ENCODE measurements at regions of chr3 and their contacts with region 1.

Region 1: DNA sequence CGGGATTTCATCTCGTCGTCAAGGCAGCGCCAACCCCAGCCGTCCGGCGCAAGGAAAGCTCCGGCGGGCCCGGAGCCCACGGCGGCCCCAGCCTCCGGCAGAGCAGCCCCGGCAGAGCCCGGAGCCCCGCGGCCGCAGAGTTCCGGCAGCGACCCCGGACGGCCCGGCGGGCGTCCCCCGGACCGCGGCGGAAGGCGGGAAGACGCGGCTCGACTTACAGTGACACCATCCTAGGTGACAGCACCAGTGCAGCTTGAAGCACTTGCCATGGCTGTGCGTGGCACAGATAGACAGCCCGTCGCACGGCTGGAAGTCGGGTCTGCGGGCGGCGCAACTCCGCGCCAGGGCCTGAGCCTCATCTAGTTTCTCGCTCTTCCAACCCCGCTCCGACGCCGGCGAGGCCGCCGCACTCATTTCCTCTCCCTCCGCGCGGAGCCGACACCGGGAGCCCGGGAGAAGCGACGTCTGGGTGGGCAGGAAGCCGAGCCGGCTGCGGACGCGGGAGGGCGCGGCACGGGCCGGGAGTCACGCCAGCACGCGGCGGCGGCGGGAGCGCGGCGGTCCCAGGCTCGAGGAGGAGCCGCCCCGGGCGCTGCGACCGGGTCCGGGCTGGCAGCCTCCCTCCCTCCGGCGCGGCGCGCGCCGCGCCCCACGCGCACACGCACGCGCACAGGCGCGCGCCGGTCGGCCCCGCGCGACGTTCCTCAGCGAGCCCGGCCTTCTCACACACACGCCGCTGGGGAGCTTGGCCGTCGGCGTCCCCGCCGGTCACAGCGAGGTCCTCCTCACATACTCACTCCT is at the start of gene C3orf70:
- DNase-seq: peak; percentile 78
- total RNA-seq, gene C3orf70: 2.2 TPM

Region 2: GRCh38 chr3:184811999-184812661 is 340.5 kb before region 1 on chr3 and contains the start of gene VPS8:
- intact Hi-C with region 1: loop called (anchors 5 kb)
- DNase-seq: peak; percentile 99
- total RNA-seq, gene VPS8: 101 TPM

Region 3: GRCh38 chr3:185049710-185050109 is 102.9 kb before region 1 on chr3:
- intact Hi-C with region 1: loop called (anchors 10 kb)
- DNase-seq: no peak

Region 4: GRCh38 chr3:185444329-185444728 is 291.7 kb after region 1 on chr3:
- intact Hi-C with region 1: no loop called
- DNase-seq: no peak

Measured in cardiac septum (tissue), 1 donor.